Gastrocnemius medialis (tissue), 4 donors: ENCODE measurements at regions of chr15 and their contacts with region 1.

Region 1: GRCh38 chr15:29403772-29404171 is 134.2 kb upstream of the NSMCE3 start:
- DNase-seq: no peak
- ATAC-seq: no peak
- H3K4me3 ChIP-seq: no peak overlapping the region
- H3K27ac ChIP-seq: no peak overlapping the region
- H3K4me1 ChIP-seq: no peaks in the 10 kb centered on the region
- H3K27me3 ChIP-seq: no peaks in the 10 kb centered on the region
- CTCF ChIP-seq: no peak
- POLR2A ChIP-seq: no peak

Region 2: GRCh38 chr15:29312387-29312786 is 91.4 kb before region 1 on chr15:
- in situ Hi-C with region 1: loop called in 1 of 4 experiments (anchors 25 kb)
- intact Hi-C with region 1: no loop called
- DNase-seq: no peak
- ATAC-seq: no peak
- H3K4me3 ChIP-seq: no peak overlapping the region
- H3K27ac ChIP-seq: no peak overlapping the region
- H3K4me1 ChIP-seq: no peaks in the 10 kb centered on the region
- H3K27me3 ChIP-seq: no peaks in the 10 kb centered on the region
- CTCF ChIP-seq: no peak
- POLR2A ChIP-seq: no peak